Heart right ventricle (tissue), 16 donors: ENCODE measurements at regions of chr15 and their contacts with region 1.

Region 1: GRCh38 chr15:48645558-48646330 is at the start of gene FBN1:
- DNase-seq: peak; percentile 67 to 80
- ATAC-seq: peak; percentile 83 to 93 (median 88)
- H3K4me3 ChIP-seq: peak within 1 kb of the TSS; percentile 64 to 96 (median 89)
- H3K27ac ChIP-seq: peak within 1 kb of the TSS; percentile 85 to 93 (median 90)
- H3K4me1 ChIP-seq: peaks cover 0 to 42% (median 15%) of the 10 kb centered on the region in 9 donors
- H3K27me3 ChIP-seq: peaks cover 0 to 30% (median 6%) of the 10 kb centered on the region in 7 donors
- CTCF ChIP-seq: no peak
- total RNA-seq, gene FBN1: 18.4 to 116 (median 32.9) TPM

Region 2: DNA sequence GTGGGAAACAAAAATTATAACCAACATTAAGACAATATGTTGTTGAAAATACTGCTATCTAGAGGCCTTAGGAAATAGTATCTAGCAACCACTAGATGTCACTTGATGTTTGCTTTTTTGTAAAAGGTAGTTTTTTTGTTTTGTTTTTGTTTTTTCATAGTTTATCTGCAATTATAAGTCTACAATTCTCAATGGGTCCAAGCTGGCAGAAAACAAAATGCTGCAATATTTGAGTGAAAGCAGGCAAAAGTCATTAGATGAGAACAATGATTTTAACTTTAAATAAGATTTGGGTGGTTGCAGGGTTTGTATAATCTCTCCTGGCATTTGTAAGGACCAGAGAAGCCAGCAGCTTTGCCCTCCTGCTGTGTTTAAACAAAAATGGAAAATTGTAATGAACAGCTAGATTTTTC is 287.5 kb before region 1 on chr15:
- intact Hi-C with region 1: loop called in 3 of 10 experiments (anchors 5 to 10 kb)
- DNase-seq: no peak
- ATAC-seq: peak in 6 of 8 donors; percentile 33 to 71 (median 58)
- H3K4me3 ChIP-seq: no peak overlapping the region
- H3K27ac ChIP-seq: peak overlapping the region in 6 of 10 donors; percentile 31 to 54 (median 42)
- H3K4me1 ChIP-seq: peaks cover 0 to 24% (median 5%) of the 10 kb centered on the region in 9 donors
- H3K27me3 ChIP-seq: no peaks in the 10 kb centered on the region
- CTCF ChIP-seq: peak; percentile 24 to 75 (median 59)

Region 3: GRCh38 chr15:48507416-48508065 is 138.2 kb before region 1 on chr15:
- intact Hi-C with region 1: loop called in 4 of 10 experiments (anchors 5 to 10 kb)
- DNase-seq: peak in 1 of 2 donors; percentile 25
- ATAC-seq: peak in 5 of 8 donors; percentile 25 to 79 (median 56)
- H3K4me3 ChIP-seq: no peak overlapping the region
- H3K27ac ChIP-seq: no peak overlapping the region
- H3K4me1 ChIP-seq: peaks cover 0 to 22% (median 0%) of the 10 kb centered on the region in 9 donors
- H3K27me3 ChIP-seq: no peaks in the 10 kb centered on the region
- CTCF ChIP-seq: peak; percentile 27 to 67 (median 54)

Region 4: GRCh38 chr15:48559285-48559684 is 86.5 kb before region 1 on chr15:
- intact Hi-C with region 1: loop called in 1 of 10 experiments (anchors 10 kb)
- DNase-seq: no peak
- ATAC-seq: peak in 4 of 8 donors; percentile 49 to 60 (median 54)
- H3K4me3 ChIP-seq: no peak overlapping the region
- H3K27ac ChIP-seq: peak overlapping the region in 5 of 10 donors; percentile 23 to 64 (median 37)
- H3K4me1 ChIP-seq: peaks cover 0 to 44% (median 25%) of the 10 kb centered on the region in 9 donors
- H3K27me3 ChIP-seq: no peaks in the 10 kb centered on the region
- CTCF ChIP-seq: no peak

Region 5: DNA sequence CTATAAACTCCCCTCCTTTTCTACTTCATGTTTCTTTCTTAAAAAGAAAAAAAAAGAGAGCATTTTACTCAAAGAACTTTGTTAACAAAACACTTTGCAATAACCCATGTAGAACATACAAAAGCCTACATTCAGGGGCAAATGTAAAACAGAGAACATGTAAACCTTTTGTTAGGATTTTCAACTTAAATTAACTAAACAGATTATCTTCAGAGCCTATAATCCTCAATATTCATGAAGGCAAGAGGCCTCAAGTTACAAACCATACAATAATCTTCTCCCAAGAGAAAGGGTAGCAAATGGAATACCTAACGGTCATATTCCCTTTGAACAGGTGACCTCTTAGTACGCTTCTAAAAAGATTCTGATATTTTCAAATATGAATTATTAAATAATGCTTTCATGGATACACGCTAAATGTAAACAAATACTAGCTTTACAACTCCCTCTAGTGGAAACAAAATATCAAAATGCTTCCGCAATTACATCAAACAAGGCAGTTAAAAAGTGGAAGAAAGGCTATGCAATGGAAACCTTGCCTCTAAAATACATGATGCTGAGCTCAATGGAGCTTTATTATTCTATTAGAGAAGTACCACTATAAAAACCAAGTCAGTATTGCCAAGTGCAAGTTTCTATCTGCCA is 155.2 kb after region 1 on chr15:
- intact Hi-C with region 1: loop called in 4 of 10 experiments (anchors 5 to 10 kb)
- DNase-seq: no peak
- ATAC-seq: peak in 2 of 8 donors; percentile 49 to 53
- H3K4me3 ChIP-seq: no peak overlapping the region
- H3K27ac ChIP-seq: peak overlapping the region in 2 of 10 donors; percentile 7 to 8
- H3K4me1 ChIP-seq: peaks cover 0 to 24% (median 2%) of the 10 kb centered on the region in 9 donors
- H3K27me3 ChIP-seq: no peaks in the 10 kb centered on the region
- CTCF ChIP-seq: peak; percentile 7 to 67 (median 57)